PC-9 (cell line): ENCODE measurements at regions of chr9 and their contacts with region 1.

Region 1: DNA sequence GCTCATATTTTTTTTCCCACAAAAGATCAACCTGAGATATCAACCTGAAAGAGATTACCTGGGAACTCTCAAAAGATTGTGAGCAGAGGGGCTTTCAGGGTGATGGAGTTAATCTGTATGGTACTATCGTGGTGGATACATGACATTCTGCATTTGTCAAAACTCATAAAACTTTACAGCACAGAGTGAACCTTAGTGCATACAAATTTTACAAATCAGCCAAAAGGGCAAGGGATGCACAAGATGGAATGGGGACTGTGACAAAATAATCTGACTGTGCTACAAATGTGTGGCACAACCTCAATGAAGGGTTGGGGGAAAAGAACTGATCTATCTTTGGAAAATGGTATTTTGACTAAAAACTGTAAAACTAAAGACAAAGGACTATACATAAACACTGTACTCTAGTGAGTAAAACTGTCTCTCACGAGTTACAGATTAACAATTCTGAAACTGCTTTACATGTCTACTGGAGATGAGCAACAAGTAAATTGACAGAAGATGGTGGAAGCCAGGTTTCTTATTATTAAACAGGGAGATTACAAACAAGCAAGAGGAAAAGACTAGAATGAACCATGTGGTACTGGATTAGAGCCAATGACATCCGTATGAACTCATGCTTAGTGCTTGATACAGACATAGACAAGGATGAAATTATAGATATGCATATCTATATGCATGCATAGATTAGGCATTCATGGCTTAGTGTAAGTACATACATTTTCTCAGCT is 24.8 kb upstream of the RLN1 start:
- DNase-seq: no peak
- H3K4me3 ChIP-seq: no peak overlapping the region
- H3K27ac ChIP-seq: no peak overlapping the region
- H3K4me1 ChIP-seq: no peaks in the 10 kb centered on the region
- H3K27me3 ChIP-seq: no peaks in the 10 kb centered on the region
- CTCF ChIP-seq: no peak

Region 2: DNA sequence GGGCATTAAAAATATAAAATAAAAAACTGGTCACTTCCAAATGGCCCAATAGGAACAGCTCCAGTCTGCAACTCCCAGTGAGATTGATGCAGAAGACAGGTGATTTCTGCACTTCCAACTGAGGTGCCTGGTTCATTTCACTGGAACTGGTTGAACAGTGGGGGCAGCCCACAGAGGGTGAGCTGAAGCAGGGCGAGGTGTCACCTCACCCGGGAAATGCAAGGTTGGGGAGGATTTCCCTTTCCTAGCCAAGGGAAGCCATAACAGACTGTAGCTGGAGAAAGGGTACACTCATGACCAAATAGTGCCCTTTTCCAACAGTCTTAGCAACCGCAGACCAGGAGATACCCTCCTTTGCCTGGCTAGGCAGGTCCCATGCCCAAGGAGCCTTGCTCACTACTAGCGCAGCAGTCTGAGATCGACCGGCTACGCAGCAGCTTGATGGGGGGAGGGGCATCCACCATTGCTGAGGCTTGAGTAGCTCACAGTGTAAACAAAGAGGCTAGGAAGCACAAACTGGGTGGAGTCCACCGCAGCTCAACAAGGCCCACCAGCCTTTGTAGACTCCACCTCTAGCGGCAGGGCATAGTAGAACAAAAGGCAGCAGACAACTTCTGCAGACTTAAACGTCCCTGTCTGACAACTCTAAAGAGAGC is 37.4 kb before region 1 on chr9:
- CTCF ChIA-PET with region 1: interaction called, 13 read pairs
- POLR2A ChIA-PET with region 1: no interaction called
- intact Hi-C with region 1: no loop called
- DNase-seq: peak; percentile 37 to 64
- H3K4me3 ChIP-seq: no peak overlapping the region
- H3K27ac ChIP-seq: no peak overlapping the region
- H3K4me1 ChIP-seq: no peaks in the 10 kb centered on the region
- H3K27me3 ChIP-seq: no peaks in the 10 kb centered on the region
- CTCF ChIP-seq: no peak

Region 3: DNA sequence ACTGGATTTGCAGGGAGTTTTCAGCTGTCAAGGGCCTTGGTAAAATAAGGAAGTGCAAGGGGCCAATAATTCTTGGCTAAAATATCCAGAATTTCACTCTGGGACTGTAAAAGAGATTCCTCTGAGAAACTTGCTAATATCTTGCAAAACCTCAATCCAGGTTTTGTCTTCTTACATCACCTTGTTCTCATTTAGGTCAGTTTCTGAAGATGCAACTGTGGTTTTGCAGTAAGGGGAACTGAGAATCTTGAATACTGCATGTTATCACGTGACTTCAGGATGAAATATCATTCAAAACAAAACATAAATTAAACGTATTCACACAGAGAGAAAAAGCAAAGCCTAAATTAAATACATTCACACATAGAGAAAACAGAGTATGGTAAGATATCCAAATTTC is 229.4 kb after region 1 on chr9:
- CTCF ChIA-PET with region 1: no interaction called
- POLR2A ChIA-PET with region 1: no interaction called
- intact Hi-C with region 1: no loop called
- DNase-seq: no peak
- H3K4me3 ChIP-seq: no peak overlapping the region
- H3K27ac ChIP-seq: no peak overlapping the region
- H3K4me1 ChIP-seq: no peaks in the 10 kb centered on the region
- H3K27me3 ChIP-seq: no peaks in the 10 kb centered on the region
- CTCF ChIP-seq: no peak